GM18951 (cell line): ENCODE measurements at regions of chr20 and their contacts with region 1.

Region 1: GRCh38 chr20:37534401-37535157 is 6.9 kb upstream of the BLCAP start:
- POLR2A ChIP-seq: no peak

Region 2: DNA sequence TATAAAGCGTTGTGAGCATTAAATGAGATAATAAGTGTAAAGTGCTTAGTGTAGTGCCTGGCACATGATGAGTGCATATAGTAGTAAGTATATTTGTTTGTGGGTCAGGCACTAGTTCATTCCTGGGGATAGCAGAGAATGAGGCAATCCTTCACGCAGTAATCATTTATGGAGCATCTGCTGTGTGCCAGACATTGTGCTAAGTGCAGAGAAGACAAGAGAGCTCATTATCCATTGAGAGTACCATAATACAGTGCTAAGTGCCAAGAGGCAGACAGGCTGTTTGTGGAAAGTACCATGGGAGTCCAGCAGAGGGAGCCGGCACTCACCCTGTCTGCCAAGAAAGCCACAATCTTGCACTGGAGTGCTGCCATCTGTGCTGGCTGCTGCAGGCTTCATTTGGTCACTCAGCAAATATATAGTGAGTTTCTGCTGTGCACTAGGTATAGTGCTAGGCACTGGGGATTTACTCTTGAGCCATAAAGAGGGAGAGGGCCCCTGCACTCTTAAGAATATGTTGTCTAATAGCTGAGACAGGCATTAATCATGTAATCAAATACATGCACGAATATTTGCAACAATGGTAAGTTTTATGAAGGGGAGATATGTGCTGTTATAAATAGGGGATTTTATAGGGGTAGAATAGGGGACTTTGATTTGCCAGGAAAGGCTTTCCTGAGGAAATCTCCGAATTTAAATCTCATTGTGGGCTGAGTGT is 342.3 kb before region 1 on chr20:
- in situ Hi-C with region 1: loop called (anchors 10 kb)
- POLR2A ChIP-seq: no peak

Region 3: GRCh38 chr20:37270576-37271420 is 263.8 kb before region 1 on chr20:
- in situ Hi-C with region 1: loop called (anchors 25 kb)
- POLR2A ChIP-seq: no peak